ENCODE measurements at regions of chr17 and their contacts with region 1.

Region 1: DNA sequence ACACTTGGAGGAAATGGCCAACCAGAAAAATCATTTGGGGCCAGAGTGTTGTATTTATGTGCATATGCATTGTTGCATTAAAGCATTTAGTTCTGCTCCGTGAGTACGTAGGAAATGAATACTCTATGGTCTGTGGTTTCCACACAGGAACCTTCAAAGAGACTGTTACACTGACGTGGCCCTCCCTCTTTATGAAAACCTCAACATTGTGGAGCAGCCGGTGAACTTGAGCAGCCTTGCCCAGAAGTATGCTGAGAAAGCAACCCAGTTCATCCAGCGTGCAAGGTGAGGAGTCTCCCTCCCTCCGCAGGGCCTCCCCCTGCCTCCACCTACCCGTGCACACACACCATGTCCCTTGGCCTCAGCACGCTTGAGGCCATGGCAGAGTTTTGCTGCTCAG is 65.2 kb downstream of the ARSG start:
- DNase-seq: peak; percentile 80
- ATAC-seq: peak; percentile 93
- H3K4me3 Mint-ChIP-seq: peak overlapping the region; percentile 45
- H3K27ac Mint-ChIP-seq: peak overlapping the region; percentile 76
- H3K4me1 Mint-ChIP-seq: peaks cover 58% of the 10 kb centered on the region
- H3K27me3 Mint-ChIP-seq: no peaks in the 10 kb centered on the region

Region 2: DNA sequence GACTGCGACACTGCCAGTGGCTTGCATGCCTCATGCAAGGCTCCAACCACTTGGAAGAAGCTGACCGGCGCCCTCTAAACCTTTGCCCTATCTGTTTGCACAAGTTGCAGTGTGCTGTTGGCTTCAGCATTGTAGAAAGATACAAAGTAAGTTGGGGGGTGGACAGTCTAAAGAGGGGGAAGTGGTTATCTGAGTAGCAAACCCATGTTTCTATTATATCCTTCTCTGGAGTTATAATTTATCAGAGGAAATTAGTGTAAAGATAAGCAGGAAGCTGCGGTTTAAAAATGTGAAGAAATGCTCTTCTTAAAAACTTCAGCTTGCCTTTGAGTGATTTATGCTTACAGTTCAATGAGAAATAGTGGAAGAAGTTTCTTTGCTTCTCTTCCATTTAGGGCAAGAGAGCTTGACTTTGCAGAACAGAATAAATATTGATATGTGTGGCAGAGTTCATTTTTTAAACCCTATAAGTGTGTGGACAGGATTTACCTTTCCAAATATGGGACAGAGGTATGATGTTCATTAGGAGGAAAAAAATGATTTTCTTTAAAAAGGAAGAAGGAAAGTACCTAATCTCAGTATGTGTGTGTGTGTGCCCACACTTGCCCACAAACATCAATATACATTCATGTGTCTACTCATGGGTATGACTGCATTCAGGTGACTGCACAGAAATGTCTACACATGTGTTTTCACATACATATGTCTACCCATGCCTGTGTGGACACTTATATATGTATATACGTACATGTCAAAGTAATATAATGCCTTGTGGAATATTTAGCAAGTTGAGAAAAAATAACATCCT is 100.6 kb before region 1 on chr17:
- CTCF ChIA-PET with region 1: no interaction called
- POLR2A ChIA-PET with region 1: no interaction called
- intact Hi-C with region 1: no loop called
- DNase-seq: peak; percentile 54
- ATAC-seq: peak; percentile 75
- H3K4me3 Mint-ChIP-seq: no peak overlapping the region
- H3K27ac Mint-ChIP-seq: peak overlapping the region; percentile 65
- H3K4me1 Mint-ChIP-seq: peaks cover 78% of the 10 kb centered on the region
- H3K27me3 Mint-ChIP-seq: no peaks in the 10 kb centered on the region

Region 3: GRCh38 chr17:68318103-68318991 is 38.2 kb before region 1 on chr17:
- CTCF ChIA-PET with region 1: no interaction called
- POLR2A ChIA-PET with region 1: no interaction called
- intact Hi-C with region 1: loop called in 1 of 2 experiments (anchors 2 kb)
- DNase-seq: no peak
- ATAC-seq: peak; percentile 26
- H3K4me3 Mint-ChIP-seq: no peak overlapping the region
- H3K27ac Mint-ChIP-seq: no peak overlapping the region
- H3K4me1 Mint-ChIP-seq: peaks cover 35% of the 10 kb centered on the region
- H3K27me3 Mint-ChIP-seq: no peaks in the 10 kb centered on the region

Region 4: DNA sequence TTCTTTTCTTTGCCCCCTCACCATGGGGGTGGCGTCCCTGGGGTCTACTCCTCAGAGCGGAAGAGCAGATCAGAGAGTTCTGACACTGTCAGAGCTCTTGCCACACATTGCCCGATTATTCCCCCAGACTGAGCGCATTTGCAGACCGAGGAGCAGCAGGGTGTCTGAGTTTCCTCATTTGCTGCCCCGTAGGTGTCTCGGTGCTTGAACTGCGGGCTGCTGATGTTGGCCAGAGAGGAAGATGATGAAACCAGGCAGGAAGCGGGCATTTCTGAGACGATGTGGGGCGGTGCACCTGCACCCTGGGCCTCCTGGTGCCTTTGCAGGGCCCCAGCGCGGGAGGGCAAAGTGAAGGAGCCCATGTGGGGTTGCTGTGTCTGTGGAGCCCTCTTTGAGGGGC is 10.1 kb before region 1 on chr17:
- CTCF ChIA-PET with region 1: interaction called, 3 read pairs
- POLR2A ChIA-PET with region 1: no interaction called
- intact Hi-C with region 1: loop called (anchors 1 kb)
- DNase-seq: peak; percentile 88
- ATAC-seq: peak; percentile 84
- H3K4me3 Mint-ChIP-seq: peak overlapping the region; percentile 79
- H3K27ac Mint-ChIP-seq: peak overlapping the region; percentile 100
- H3K4me1 Mint-ChIP-seq: peaks cover 67% of the 10 kb centered on the region
- H3K27me3 Mint-ChIP-seq: no peaks in the 10 kb centered on the region

Region 5: DNA sequence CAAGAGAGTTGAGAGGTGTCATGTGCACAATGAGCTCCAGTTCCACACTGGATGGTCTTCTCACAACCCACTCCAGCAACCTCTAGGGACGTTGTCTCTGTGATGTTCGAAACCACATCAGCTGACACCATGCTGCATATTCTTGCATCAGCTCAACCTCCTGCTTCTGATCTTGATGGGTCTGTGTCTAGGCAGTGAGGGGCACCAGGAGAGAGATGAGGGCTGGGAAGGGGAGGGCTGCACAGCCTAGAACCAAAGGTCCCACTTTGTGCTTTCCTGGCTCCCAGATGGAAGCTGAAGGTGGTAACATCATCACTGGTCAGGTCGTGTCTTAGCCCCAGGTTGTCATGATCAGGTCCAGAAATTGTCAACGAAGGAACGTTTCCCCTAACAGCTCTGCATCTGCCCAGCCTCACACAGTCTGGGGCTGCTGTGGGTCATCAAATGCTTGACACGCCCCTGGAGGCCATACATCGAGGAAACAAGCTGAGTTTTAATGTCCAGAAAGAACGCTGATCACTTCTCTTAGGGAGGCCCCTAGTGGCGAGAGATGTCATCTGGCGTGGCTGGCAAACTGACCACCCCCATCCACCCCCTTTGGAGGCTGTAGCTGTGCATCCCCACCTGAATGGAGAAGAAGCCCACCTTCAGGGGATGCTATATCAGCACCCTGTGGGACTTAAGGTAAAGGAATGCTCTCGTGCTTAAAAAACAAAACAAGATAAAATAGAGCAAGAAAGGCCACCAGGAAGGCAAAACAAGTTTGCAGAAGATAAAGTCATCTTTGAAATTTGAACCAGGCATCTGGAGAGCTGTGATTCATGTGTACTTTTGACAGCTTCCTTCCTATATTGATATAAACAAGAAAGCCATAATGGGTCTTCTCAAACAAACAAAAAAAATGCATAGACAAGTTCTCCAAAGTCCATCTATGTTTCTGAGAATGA is 42.4 kb after region 1 on chr17:
- CTCF ChIA-PET with region 1: interaction called, 5 read pairs
- POLR2A ChIA-PET with region 1: no interaction called
- intact Hi-C with region 1: loop called in 1 of 2 experiments (anchors 1 kb)
- DNase-seq: peak; percentile 59
- ATAC-seq: peak; percentile 35
- H3K4me3 Mint-ChIP-seq: peak overlapping the region; percentile 18
- H3K27ac Mint-ChIP-seq: peak overlapping the region; percentile 82
- H3K4me1 Mint-ChIP-seq: peaks cover 34% of the 10 kb centered on the region
- H3K27me3 Mint-ChIP-seq: no peaks in the 10 kb centered on the region

Region 6: GRCh38 chr17:68591583-68591982 is 235.1 kb after region 1 on chr17:
- CTCF ChIA-PET with region 1: no interaction called
- POLR2A ChIA-PET with region 1: no interaction called
- intact Hi-C with region 1: no loop called
- DNase-seq: peak; percentile 28
- ATAC-seq: no peak
- H3K4me3 Mint-ChIP-seq: no peak overlapping the region
- H3K27ac Mint-ChIP-seq: no peak overlapping the region
- H3K4me1 Mint-ChIP-seq: peaks cover 7% of the 10 kb centered on the region
- H3K27me3 Mint-ChIP-seq: peaks cover 21% of the 10 kb centered on the region

Measured in activated CD4-positive, alpha-beta T cell treated with anti-CD3 and anti-CD28 coated beads for 36 hours (primary cell).